ENCODE measurements at regions of chr1 and their contacts with region 1.

Region 1: GRCh38 chr1:23184212-23184934 is 15.7 kb upstream of the LUZP1 start:
- DNase-seq: peak; percentile 77
- H3K4me3 ChIP-seq: peak overlapping the region; percentile 32
- H3K27ac ChIP-seq: no peak overlapping the region
- H3K4me1 ChIP-seq: no peaks in the 10 kb centered on the region
- H3K27me3 ChIP-seq: no peaks in the 10 kb centered on the region
- CTCF ChIP-seq: peak; percentile 69

Region 2: GRCh38 chr1:22976461-22977243 is 207.7 kb before region 1 on chr1:
- CTCF ChIA-PET with region 1: interaction called, 9 read pairs
- POLR2A ChIA-PET with region 1: no interaction called
- intact Hi-C with region 1: loop called (anchors 1 kb)
- DNase-seq: peak; percentile 90
- H3K4me3 ChIP-seq: no peak overlapping the region
- H3K27ac ChIP-seq: no peak overlapping the region
- H3K4me1 ChIP-seq: peaks cover 16% of the 10 kb centered on the region
- H3K27me3 ChIP-seq: no peaks in the 10 kb centered on the region
- CTCF ChIP-seq: peak; percentile 94

Region 3: DNA sequence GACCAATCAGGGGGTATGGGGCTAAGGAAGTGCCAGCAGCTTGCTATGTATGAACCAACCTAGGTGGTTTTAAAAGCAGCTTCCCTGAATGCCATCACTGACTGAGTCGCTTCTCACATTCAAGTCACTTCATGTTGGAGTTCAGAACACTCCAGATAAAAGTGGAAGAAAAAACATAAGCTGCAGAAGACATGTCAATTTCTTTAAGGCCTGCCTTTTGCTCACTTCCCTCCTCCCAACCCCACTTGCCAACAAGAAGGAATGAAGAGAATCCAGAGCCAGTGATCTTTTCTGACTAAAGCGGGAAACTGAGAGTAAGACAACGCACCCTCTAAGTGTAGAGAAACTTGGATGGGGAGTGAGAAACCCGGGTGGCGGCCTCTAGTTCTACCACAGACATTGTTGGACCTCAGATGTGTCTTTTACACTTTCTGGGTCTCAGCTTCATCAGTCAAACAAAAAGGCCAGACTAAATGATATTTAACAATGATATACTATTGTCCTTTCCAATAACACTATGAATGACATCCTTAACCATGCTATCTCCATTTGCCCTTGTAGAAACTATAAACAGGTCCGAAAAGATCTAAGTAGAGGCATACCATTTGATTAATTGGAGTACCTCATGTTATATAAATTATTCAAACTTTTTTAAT is 69.8 kb before region 1 on chr1:
- CTCF ChIA-PET with region 1: no interaction called
- POLR2A ChIA-PET with region 1: no interaction called
- intact Hi-C with region 1: no loop called
- DNase-seq: no peak
- H3K4me3 ChIP-seq: no peak overlapping the region
- H3K27ac ChIP-seq: no peak overlapping the region
- H3K4me1 ChIP-seq: peaks cover 13% of the 10 kb centered on the region
- H3K27me3 ChIP-seq: no peaks in the 10 kb centered on the region
- CTCF ChIP-seq: no peak

Region 4: GRCh38 chr1:23168457-23169194 is 15.7 kb before region 1 on chr1 and contains the start of gene LUZP1:
- CTCF ChIA-PET with region 1: interaction called, 7 read pairs
- POLR2A ChIA-PET with region 1: interaction called, 11 read pairs
- intact Hi-C with region 1: no loop called
- DNase-seq: peak; percentile 85
- H3K4me3 ChIP-seq: peak within 1 kb of the TSS; percentile 90
- H3K27ac ChIP-seq: peak within 1 kb of the TSS; percentile 90
- H3K4me1 ChIP-seq: peaks cover 36% of the 10 kb centered on the region
- H3K27me3 ChIP-seq: no peaks in the 10 kb centered on the region
- CTCF ChIP-seq: no peak
- total RNA-seq, gene LUZP1: 32.6 and 34.9 TPM in 2 replicates